ENCODE measurements at regions of chr10 and their contacts with region 1.

Region 1: GRCh38 chr10:58993480-58994221 is 182.8 kb upstream of the PHYHIPL start:
- DNase-seq: peak; percentile 63
- ATAC-seq: peak; percentile 88
- H3K4me3 ChIP-seq: no peak overlapping the region
- H3K27ac ChIP-seq: peak overlapping the region; percentile 31; the same call in 1 of the 2 replicates
- H3K4me1 ChIP-seq: peaks cover 38% of the 10 kb centered on the region
- H3K27me3 ChIP-seq: no peaks in the 10 kb centered on the region
- CTCF ChIP-seq: no peak
- EP300 ChIP-seq: peak; percentile 75 to 95; a peak in 3 of 4 replicates
- POLR2A ChIP-seq: no peak
- RAD21 ChIP-seq: peak; percentile 19; the same call in 1 of the 2 replicates

Region 2: DNA sequence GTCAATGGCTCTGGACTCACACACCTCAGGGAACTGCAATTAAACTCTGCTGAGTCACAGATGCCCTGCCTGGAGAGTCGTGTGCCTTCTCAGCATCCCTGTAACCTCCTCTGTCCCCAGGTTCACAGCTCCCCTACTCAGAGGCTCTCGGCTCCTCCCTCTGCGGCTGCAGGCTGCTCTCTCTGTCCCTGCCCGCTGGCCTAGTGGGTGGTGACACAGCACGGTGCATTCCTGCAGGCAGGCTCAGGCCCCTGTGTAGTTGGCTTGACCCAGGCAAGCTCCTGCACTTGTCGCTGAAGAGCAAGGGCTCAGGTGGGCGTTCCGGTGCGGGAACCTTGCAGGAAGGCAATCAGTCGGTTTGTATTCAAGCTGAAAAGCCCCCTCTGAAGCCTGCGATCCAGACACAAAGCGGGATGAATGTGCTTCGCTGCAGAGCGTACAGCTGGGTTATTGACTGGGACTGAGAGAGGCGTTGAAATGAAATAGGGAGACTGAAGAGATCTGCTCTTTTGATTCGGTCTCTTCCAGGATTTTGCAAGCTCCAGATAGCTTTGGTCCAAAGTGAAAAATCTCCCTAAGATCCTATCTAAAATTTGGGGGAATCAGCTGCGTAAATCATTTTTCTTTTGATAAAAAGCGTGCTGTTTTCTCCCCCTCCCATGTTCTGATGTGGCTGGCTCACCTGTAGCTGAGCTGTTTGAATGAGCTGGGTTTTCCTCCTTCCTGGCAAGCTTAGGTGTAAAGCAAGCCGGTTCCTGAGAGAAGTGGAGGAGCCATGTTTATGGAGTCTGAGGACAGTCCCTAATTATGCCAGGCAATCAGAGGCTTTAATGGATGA is 25.9 kb before region 1 on chr10:
- CTCF ChIA-PET with region 1: interaction called, 5 read pairs
- POLR2A ChIA-PET with region 1: interaction called, 9 read pairs
- RAD21 ChIA-PET with region 1: interaction called, 13 read pairs
- SMC1A ChIA-PET with region 1: interaction called, 23 read pairs
- in situ Hi-C with region 1: no loop called
- intact Hi-C with region 1: no loop called
- DNase-seq: no peak
- ATAC-seq: peak; percentile 88
- H3K4me3 ChIP-seq: no peak overlapping the region
- H3K27ac ChIP-seq: no peak overlapping the region
- H3K4me1 ChIP-seq: no peaks in the 10 kb centered on the region
- H3K27me3 ChIP-seq: no peaks in the 10 kb centered on the region
- CTCF ChIP-seq: no peak
- EP300 ChIP-seq: no peak
- POLR2A ChIP-seq: no peak
- RAD21 ChIP-seq: no peak

Region 3: GRCh38 chr10:59006511-59007306 is 13.1 kb after region 1 on chr10:
- CTCF ChIA-PET with region 1: interaction called, 20 read pairs
- POLR2A ChIA-PET with region 1: interaction called, 10 read pairs
- RAD21 ChIA-PET with region 1: interaction called, 223 read pairs
- SMC1A ChIA-PET with region 1: interaction called, 222 read pairs
- in situ Hi-C with region 1: no loop called
- intact Hi-C with region 1: no loop called
- DNase-seq: no peak
- ATAC-seq: peak; percentile 49
- H3K4me3 ChIP-seq: no peak overlapping the region
- H3K27ac ChIP-seq: no peak overlapping the region
- H3K4me1 ChIP-seq: peaks cover 4% of the 10 kb centered on the region
- H3K27me3 ChIP-seq: no peaks in the 10 kb centered on the region
- CTCF ChIP-seq: no peak
- EP300 ChIP-seq: 0 out of 4 replicates have a peak, but pooled peaks of 1 of the 2 experiments have one; percentile 26
- POLR2A ChIP-seq: no peak
- RAD21 ChIP-seq: no peak

Region 4: GRCh38 chr10:59019603-59020002 is 26.0 kb after region 1 on chr10:
- CTCF ChIA-PET with region 1: interaction called, 4 read pairs
- POLR2A ChIA-PET with region 1: interaction called, 3 read pairs
- RAD21 ChIA-PET with region 1: interaction called, 223 read pairs
- SMC1A ChIA-PET with region 1: interaction called, 222 read pairs
- in situ Hi-C with region 1: no loop called
- intact Hi-C with region 1: no loop called
- DNase-seq: no peak
- ATAC-seq: peak; percentile 34; the same call in 2 of the 3 replicates
- H3K4me3 ChIP-seq: no peak overlapping the region
- H3K27ac ChIP-seq: no peak overlapping the region
- H3K4me1 ChIP-seq: no peaks in the 10 kb centered on the region
- H3K27me3 ChIP-seq: no peaks in the 10 kb centered on the region
- CTCF ChIP-seq: no peak
- EP300 ChIP-seq: no peak
- POLR2A ChIP-seq: no peak
- RAD21 ChIP-seq: no peak

Region 5: DNA sequence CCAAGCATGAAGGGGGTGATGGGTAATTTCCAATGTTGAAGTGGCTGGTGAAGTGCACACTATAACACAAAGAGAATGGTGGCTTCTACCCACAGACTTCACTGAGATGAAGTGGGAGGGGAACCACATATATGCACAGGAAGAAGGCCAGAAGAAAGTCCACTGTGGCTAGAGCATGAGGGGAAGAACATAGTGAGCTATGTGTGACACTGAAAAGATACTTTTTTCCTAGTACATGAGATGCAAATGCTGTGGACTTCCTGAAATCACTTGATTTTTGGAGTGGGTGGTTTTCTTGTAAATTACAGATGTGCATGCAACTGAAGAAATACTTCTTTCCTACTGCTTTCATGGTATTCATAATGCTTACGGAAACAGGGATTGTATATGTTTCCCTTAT is 67.2 kb after region 1 on chr10:
- CTCF ChIA-PET with region 1: interaction called, 4 read pairs
- POLR2A ChIA-PET with region 1: interaction called, 5 read pairs
- RAD21 ChIA-PET with region 1: interaction called, 16 read pairs
- SMC1A ChIA-PET with region 1: interaction called, 19 read pairs
- in situ Hi-C with region 1: no loop called
- intact Hi-C with region 1: no loop called
- DNase-seq: peak; percentile 53
- ATAC-seq: peak; percentile 87
- H3K4me3 ChIP-seq: no peak overlapping the region
- H3K27ac ChIP-seq: no peak overlapping the region
- H3K4me1 ChIP-seq: peaks cover 7% of the 10 kb centered on the region
- H3K27me3 ChIP-seq: no peaks in the 10 kb centered on the region
- CTCF ChIP-seq: no peak
- EP300 ChIP-seq: peak; percentile 27 to 67; a peak in 3 of 4 replicates
- POLR2A ChIP-seq: no peak
- RAD21 ChIP-seq: no peak; the same call in 1 of the 2 replicates

Region 6: DNA sequence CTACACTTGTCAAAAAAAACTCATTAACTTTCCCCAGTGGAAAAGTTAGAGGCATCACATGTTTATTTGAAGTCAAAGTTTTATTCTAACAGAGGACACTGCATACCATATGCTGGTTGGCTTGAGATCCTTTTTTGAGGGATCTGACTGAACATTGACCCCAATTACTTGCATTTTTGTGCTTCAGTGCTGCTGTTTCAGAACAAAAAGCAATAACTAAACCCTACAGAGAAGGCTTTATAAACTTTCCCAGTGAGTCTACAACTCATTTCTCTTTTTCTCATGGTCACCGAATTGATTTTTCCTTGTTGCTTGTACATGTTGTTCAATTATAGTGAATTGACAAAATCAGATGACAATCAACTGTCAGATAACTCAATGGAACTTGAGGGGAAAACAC is 113.5 kb after region 1 on chr10:
- CTCF ChIA-PET with region 1: interaction called, 3 read pairs
- POLR2A ChIA-PET with region 1: interaction called, 4 read pairs
- RAD21 ChIA-PET with region 1: interaction called, 25 read pairs
- SMC1A ChIA-PET with region 1: interaction called, 6 read pairs
- in situ Hi-C with region 1: no loop called
- intact Hi-C with region 1: loop called (anchors 2 kb)
- DNase-seq: peak; percentile 26
- ATAC-seq: peak; percentile 78
- H3K4me3 ChIP-seq: no peak overlapping the region
- H3K27ac ChIP-seq: no peak overlapping the region
- H3K4me1 ChIP-seq: no peaks in the 10 kb centered on the region
- H3K27me3 ChIP-seq: no peaks in the 10 kb centered on the region
- CTCF ChIP-seq: no peak
- EP300 ChIP-seq: no peak
- POLR2A ChIP-seq: no peak
- RAD21 ChIP-seq: no peak

Measured in GM12878 (cell line).